ENCODE measurements at regions of chr7 and their contacts with region 1.

Region 1: GRCh38 chr7:47179812-47180515 is 401.9 kb downstream of the TNS3 start:
- DNase-seq: peak; percentile 49
- ATAC-seq: peak; percentile 93
- H3K4me3 ChIP-seq: no peak overlapping the region
- H3K27ac ChIP-seq: no peak overlapping the region
- H3K4me1 ChIP-seq: peaks cover 14% of the 10 kb centered on the region
- H3K27me3 ChIP-seq: peaks cover 0 to 7% of the 10 kb centered on the region in 2 experiments; a peak in 2 of 5 replicates
- CTCF ChIP-seq: peak; percentile 80
- EP300 ChIP-seq: no peak
- POLR2A ChIP-seq: no peak
- RAD21 ChIP-seq: peak; percentile 78; the same call in 1 of the 2 replicates

Region 2: GRCh38 chr7:45917658-45918057 is 1262.3 kb before region 1 on chr7:
- CTCF ChIA-PET with region 1: interaction called, 6 read pairs
- POLR2A ChIA-PET with region 1: no interaction called
- in situ Hi-C with region 1: loop called (anchors 10 kb)
- intact Hi-C with region 1: loop called (anchors 2 kb)
- DNase-seq: peak; percentile 28
- ATAC-seq: peak; percentile 81
- H3K4me3 ChIP-seq: no peak overlapping the region
- H3K27ac ChIP-seq: no peak overlapping the region
- H3K4me1 ChIP-seq: peaks cover 22% of the 10 kb centered on the region
- H3K27me3 ChIP-seq: peaks cover 5 to 41% of the 10 kb centered on the region in 2 experiments; a peak in 4 of 5 replicates
- CTCF ChIP-seq: peak; percentile 89
- EP300 ChIP-seq: no peak
- POLR2A ChIP-seq: no peak
- RAD21 ChIP-seq: peak; percentile 66

Region 3: DNA sequence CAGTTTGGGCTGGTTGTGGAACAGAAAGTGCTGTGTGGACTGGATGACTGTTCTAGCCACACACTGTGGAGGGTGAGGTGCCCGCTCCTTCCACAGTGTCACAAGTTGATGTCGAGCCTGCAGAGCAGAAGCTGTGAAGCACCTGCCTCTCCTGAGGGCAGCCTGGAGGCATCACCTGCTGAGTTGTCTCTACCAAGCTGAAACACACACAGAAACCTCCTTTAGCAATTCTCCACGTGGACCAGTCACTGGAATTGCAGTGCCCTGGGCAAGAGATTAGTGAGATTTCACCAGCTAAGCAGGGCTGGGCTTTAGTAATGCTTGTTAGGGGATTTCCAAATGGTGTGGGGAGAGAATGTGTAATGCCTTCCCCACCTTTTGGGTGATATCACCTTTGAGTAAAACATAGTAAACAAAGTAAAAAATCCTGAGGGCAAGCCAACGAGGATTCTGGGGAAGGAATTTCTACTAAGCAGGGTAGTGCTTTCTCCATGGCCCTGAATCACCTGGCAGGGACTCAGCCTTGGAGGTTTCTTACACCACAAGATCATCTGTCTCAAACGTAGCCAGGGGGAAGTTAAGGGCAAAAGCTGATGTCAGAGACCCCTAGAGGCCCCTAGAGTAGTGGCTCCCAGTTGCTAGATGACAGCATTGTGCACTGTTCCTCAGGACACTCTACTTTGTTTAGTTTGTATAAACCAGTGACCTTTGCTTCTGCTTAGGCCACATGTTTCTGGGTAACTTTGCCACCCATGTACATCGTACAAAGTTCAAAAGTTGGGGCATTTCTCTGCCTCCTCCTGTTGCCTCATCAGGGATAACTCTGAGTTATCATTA is 1025.8 kb before region 1 on chr7:
- CTCF ChIA-PET with region 1: no interaction called
- POLR2A ChIA-PET with region 1: no interaction called
- in situ Hi-C with region 1: no loop called
- intact Hi-C with region 1: loop called (anchors 10 kb)
- DNase-seq: peak; percentile 87
- ATAC-seq: peak; percentile 93
- H3K4me3 ChIP-seq: peak overlapping the region in 1 of 3 experiments; percentile 13; a peak in 1 of 6 replicates
- H3K27ac ChIP-seq: peak overlapping the region; percentile 85
- H3K4me1 ChIP-seq: peaks cover 69% of the 10 kb centered on the region
- H3K27me3 ChIP-seq: no peaks in the 10 kb centered on the region
- CTCF ChIP-seq: peak; percentile 57
- EP300 ChIP-seq: peak in 1 of 2 experiments; percentile 86; a peak in 2 of 4 replicates
- POLR2A ChIP-seq: no peak
- RAD21 ChIP-seq: peak; percentile 17; the same call in 1 of the 2 replicates

Region 4: DNA sequence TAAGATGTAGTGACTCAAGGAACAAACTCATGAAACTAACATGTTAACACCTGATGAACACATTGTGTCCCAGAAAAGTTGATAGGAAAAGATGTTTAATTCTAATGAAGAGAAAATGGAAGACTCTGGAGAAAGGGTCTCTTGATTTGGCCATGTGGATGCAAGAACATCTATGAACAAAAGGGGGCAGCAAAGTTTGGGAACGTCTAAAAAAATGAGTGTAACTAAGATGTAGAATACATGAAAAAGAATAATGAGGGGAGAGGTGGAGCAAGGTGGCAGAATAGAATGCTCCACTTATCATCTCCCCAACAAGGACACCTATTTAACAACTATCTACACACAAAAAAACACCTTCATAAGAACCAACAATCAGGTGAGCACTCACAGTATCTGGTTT is 403.2 kb before region 1 on chr7:
- CTCF ChIA-PET with region 1: interaction called, 6 read pairs
- POLR2A ChIA-PET with region 1: no interaction called
- in situ Hi-C with region 1: no loop called
- intact Hi-C with region 1: loop called (anchors 1 kb)
- DNase-seq: no peak
- ATAC-seq: no peak
- H3K4me3 ChIP-seq: no peak overlapping the region
- H3K27ac ChIP-seq: no peak overlapping the region
- H3K4me1 ChIP-seq: no peaks in the 10 kb centered on the region
- H3K27me3 ChIP-seq: no peaks in the 10 kb centered on the region
- CTCF ChIP-seq: peak; percentile 32
- EP300 ChIP-seq: no peak
- POLR2A ChIP-seq: no peak
- RAD21 ChIP-seq: no peak

Region 5: DNA sequence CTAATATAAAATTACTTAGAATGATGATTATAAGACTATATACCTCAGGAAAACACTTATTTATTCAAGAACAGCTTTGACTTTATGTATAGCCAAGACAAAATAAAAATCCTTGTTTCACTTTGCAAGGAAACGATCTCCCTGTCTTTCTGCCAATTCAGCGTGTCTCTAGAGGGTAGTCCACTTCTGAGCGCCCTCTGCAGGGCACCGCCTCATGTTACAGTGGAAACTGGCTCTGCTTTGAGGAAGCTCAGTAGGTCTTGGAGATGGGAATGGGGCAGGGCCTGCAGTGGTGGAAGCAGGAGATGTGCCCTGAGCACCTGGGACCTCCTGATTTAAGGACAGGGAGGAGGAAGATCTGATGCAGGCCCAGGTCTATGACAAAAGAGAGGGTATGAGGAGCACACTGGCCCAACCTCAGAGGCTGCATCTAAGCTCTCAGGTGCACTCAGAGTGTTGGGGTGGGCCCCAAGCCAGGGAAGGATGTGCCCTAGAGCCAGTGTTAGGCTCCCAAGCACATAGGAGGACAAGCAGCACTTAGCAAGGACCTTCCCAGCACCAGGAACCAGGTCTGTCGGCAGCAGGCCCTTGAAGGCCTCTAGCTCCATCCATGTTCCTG is 79.0 kb before region 1 on chr7:
- CTCF ChIA-PET with region 1: interaction called, 3 read pairs
- POLR2A ChIA-PET with region 1: no interaction called
- in situ Hi-C with region 1: no loop called
- intact Hi-C with region 1: loop called (anchors 2 kb)
- DNase-seq: peak; percentile 57
- ATAC-seq: peak; percentile 98
- H3K4me3 ChIP-seq: no peak overlapping the region
- H3K27ac ChIP-seq: no peak overlapping the region
- H3K4me1 ChIP-seq: peaks cover 6% of the 10 kb centered on the region; the same call in 1 of the 2 replicates
- H3K27me3 ChIP-seq: no peaks in the 10 kb centered on the region; a peak in 1 of 5 replicates
- CTCF ChIP-seq: peak; percentile 77
- EP300 ChIP-seq: no peak
- POLR2A ChIP-seq: no peak
- RAD21 ChIP-seq: no peak

Measured in HepG2 (cell line).